Naive thymus-derived CD4-positive, alpha-beta T cell (primary cell): ENCODE measurements at regions of chr1 and their contacts with region 1.

Region 1: DNA sequence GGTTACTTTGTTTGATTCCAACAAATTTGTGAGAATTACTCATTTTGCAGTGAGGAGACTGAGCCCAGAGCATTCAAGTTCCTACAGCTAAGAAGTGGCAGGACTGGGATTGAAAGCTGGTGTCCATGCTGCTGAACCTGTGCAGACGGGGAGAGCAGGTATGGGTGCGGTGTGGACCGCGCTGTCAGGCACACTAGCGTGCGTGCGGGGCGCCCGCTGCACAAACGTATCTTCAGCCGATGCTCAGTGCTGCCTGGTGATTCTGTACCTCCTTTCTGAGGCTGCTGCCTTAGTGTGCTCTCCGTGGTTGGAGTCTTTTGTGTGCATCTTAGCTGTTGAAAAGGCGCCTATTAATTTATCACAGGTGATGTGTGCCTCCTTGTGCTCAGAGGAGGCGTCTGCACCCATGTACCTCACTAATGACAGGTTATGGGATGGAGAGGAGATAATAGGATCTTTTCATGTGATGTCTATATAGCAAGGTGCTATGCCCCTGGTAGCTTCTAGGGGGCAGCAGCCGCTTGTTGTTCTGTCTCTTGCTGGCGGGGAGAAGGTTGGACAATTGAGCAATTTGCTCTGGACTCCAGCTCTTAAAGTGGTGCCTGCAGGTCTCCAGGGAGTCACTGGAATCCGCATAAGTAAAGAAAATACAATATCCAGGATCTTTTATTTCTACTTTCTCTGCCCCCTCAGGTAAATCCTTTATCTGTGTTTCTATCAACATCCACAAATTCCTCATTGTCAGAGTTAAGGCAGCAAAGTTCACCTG is 32.5 kb downstream of the PEX14 start:
- DNase-seq: peak in 7 of 9 donors; percentile 32 to 60 (median 55)
- ATAC-seq: peak; percentile 78
- H3K4me3 ChIP-seq: no peak overlapping the region
- H3K4me3 Mint-ChIP-seq: peak overlapping the region in 4 of 10 donors; percentile 7 to 66 (median 36)
- H3K27ac ChIP-seq: no peak overlapping the region
- H3K27ac Mint-ChIP-seq: peak overlapping the region; percentile 37 to 85 (median 57)
- H3K4me1 ChIP-seq: peaks cover 29 to 32% of the 10 kb centered on the region in 2 donors
- H3K4me1 Mint-ChIP-seq: peaks cover 38 to 76% (median 54%) of the 10 kb centered on the region in 7 donors
- H3K27me3 ChIP-seq: no peaks in the 10 kb centered on the region
- H3K27me3 Mint-ChIP-seq: no peaks in the 10 kb centered on the region

Region 2: GRCh38 chr1:10549904-10550664 is 42.8 kb after region 1 on chr1:
- CTCF ChIA-PET with region 1: no interaction called
- POLR2A ChIA-PET with region 1: no interaction called
- intact Hi-C with region 1: loop called in 1 of 2 experiments (anchors 5 kb)
- DNase-seq: no peak
- ATAC-seq: no peak
- H3K4me3 ChIP-seq: no peak overlapping the region
- H3K4me3 Mint-ChIP-seq: no peak overlapping the region
- H3K27ac ChIP-seq: no peak overlapping the region
- H3K27ac Mint-ChIP-seq: peak overlapping the region in 1 of 9 donors; percentile 28
- H3K4me1 ChIP-seq: peaks cover 0 to under 1% of the 10 kb centered on the region in 2 donors
- H3K4me1 Mint-ChIP-seq: peaks cover 9 to 31% (median 18%) of the 10 kb centered on the region in 7 donors
- H3K27me3 ChIP-seq: no peaks in the 10 kb centered on the region
- H3K27me3 Mint-ChIP-seq: no peaks in the 10 kb centered on the region

Region 3: DNA sequence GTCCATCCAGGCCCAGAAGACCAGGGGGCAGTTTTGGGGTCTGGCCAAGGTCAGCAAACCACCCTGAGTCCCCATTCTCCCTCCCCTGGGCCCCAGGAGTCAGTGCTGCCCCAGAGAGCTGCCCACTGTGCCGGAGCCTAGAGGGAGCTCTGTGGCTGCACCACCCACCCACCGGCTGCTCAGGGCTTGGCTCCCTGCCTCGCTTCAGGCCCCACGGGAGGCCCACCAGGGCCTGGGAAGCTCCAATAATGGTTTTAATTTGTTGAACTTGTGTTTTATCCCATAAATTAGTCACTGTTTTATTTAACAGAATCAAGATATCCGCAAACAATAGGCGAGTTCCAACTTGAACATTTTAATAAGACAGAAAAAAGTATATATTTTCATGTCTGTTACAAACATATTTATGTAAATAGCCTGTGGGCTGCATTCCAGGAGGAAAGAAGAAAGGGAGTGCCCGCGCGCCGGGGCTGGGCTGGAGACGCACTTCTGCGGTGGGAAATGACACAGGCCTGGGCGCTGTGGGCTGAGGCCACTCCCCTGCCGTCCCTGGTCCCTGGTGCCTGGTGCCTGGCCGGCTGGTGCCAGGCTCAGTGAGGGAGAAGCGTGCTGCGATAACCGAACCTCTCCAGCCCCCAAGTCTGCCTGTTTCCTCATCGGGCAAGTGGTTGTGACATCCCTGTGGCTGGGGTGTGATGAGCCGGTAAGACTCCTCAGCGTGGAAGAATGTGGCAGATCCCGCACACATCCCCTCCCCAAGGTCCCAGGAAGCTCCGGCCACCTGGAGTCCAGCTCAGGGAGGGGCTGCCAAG is 128.0 kb after region 1 on chr1:
- CTCF ChIA-PET with region 1: interaction called, 3 read pairs
- POLR2A ChIA-PET with region 1: no interaction called
- intact Hi-C with region 1: loop called in 1 of 2 experiments (anchors 10 kb)
- DNase-seq: no peak
- ATAC-seq: no peak
- H3K4me3 ChIP-seq: no peak overlapping the region
- H3K4me3 Mint-ChIP-seq: no peak overlapping the region
- H3K27ac ChIP-seq: no peak overlapping the region
- H3K27ac Mint-ChIP-seq: no peak overlapping the region
- H3K4me1 ChIP-seq: peaks cover 0 to 4% of the 10 kb centered on the region in 2 donors
- H3K4me1 Mint-ChIP-seq: peaks cover 0 to 8% (median 3%) of the 10 kb centered on the region in 7 donors
- H3K27me3 ChIP-seq: no peaks in the 10 kb centered on the region
- H3K27me3 Mint-ChIP-seq: peaks cover 0 to 11% (median 0%) of the 10 kb centered on the region in 5 donors

Region 4: GRCh38 chr1:10867138-10867721 is 359.9 kb after region 1 on chr1:
- CTCF ChIA-PET with region 1: interaction called, 3 read pairs
- POLR2A ChIA-PET with region 1: no interaction called
- intact Hi-C with region 1: loop called (anchors 1 kb)
- DNase-seq: peak; percentile 36 to 79 (median 61)
- ATAC-seq: peak; percentile 93
- H3K4me3 ChIP-seq: peak overlapping the region; percentile 33
- H3K4me3 Mint-ChIP-seq: peak overlapping the region in 8 of 10 donors; percentile 43 to 81 (median 60)
- H3K27ac ChIP-seq: no peak overlapping the region
- H3K27ac Mint-ChIP-seq: peak overlapping the region in 1 of 9 donors; percentile 32
- H3K4me1 ChIP-seq: peaks cover 0 to 7% of the 10 kb centered on the region in 2 donors
- H3K4me1 Mint-ChIP-seq: peaks cover 8 to 32% (median 15%) of the 10 kb centered on the region in 7 donors
- H3K27me3 ChIP-seq: peaks cover 0 to 15% of the 10 kb centered on the region in 2 donors
- H3K27me3 Mint-ChIP-seq: peaks cover 51 to 74% (median 56%) of the 10 kb centered on the region in 5 donors

Region 5: DNA sequence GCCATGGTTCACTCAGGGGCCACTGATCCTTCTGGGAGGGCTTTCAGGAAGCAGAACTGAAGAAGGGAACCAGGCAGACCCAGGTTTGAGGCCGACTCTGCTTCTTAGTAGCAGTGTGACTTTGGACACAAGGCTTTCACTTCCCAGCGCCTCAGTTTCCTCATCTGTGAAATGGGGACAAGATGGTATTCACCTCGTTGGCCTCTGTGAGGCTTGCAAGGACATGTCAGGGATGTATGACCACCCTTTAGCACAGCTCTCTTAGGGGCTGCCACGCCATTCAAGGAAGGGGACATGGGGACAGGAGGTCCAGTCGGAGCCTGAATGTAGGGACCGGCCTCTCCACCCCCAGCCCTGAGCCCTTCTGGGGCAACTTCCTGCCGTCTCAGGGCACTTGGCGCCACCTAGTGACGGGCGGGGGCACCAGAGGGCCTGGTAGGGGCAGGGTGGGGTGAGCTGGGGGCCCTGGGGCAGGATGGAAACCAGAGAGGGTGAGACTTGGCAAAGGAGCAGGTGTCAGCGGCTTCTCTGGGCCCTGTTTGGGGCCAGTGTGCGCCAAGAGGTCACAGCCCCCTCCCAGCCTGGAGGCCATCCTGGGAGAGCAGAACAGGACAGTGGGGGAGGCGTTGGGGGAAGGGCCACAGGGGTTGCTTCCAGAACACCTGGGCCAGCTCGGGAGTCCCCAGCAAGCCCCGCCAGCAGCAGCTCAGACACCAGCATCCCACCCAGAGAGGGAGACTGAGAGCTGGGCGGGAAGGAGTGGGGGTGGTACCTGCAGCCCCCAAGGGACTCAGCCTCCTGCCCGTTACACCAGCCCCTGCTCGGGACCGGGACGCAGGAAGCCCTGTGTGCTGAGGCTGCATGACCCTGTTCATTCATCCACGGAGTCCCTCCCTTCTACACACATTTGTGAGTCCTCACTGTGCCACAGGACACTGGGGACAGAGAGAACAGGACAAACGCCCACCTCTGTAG is 402.7 kb after region 1 on chr1:
- CTCF ChIA-PET with region 1: interaction called, 3 read pairs
- POLR2A ChIA-PET with region 1: no interaction called
- intact Hi-C with region 1: loop called in 1 of 2 experiments (anchors 1 kb)
- DNase-seq: peak; percentile 59 to 80 (median 69)
- ATAC-seq: peak; percentile 82
- H3K4me3 ChIP-seq: no peak overlapping the region
- H3K4me3 Mint-ChIP-seq: no peak overlapping the region
- H3K27ac ChIP-seq: no peak overlapping the region
- H3K27ac Mint-ChIP-seq: peak overlapping the region in 1 of 9 donors; percentile 25
- H3K4me1 ChIP-seq: peaks cover 4 to 19% of the 10 kb centered on the region in 2 donors
- H3K4me1 Mint-ChIP-seq: peaks cover 1 to 29% (median 16%) of the 10 kb centered on the region in 7 donors
- H3K27me3 ChIP-seq: no peaks in the 10 kb centered on the region
- H3K27me3 Mint-ChIP-seq: peaks cover 0 to 15% (median 0%) of the 10 kb centered on the region in 5 donors

Region 6: GRCh38 chr1:10941891-10942541 is 434.7 kb after region 1 on chr1:
- CTCF ChIA-PET with region 1: interaction called, 6 read pairs
- POLR2A ChIA-PET with region 1: no interaction called
- intact Hi-C with region 1: loop called in 1 of 2 experiments (anchors 1 kb)
- DNase-seq: peak; percentile 23 to 75 (median 53)
- ATAC-seq: peak; percentile 78
- H3K4me3 ChIP-seq: no peak overlapping the region
- H3K4me3 Mint-ChIP-seq: peak overlapping the region in 1 of 10 donors; percentile 21
- H3K27ac ChIP-seq: no peak overlapping the region
- H3K27ac Mint-ChIP-seq: no peak overlapping the region
- H3K4me1 ChIP-seq: peaks cover 11 to 29% of the 10 kb centered on the region in 2 donors
- H3K4me1 Mint-ChIP-seq: peaks cover 20 to 49% (median 32%) of the 10 kb centered on the region in 7 donors
- H3K27me3 ChIP-seq: no peaks in the 10 kb centered on the region
- H3K27me3 Mint-ChIP-seq: peaks cover 19 to 72% (median 21%) of the 10 kb centered on the region in 5 donors